ENCODE measurements at regions of chr4 and their contacts with region 1.

Region 1: GRCh38 chr4:89537281-89537680 is 229.7 kb upstream of the GPRIN3 start:
- DNase-seq: no peak
- ATAC-seq: no peak
- H3K4me3 Mint-ChIP-seq: no peak overlapping the region
- H3K27ac Mint-ChIP-seq: no peak overlapping the region
- H3K4me1 Mint-ChIP-seq: no peaks in the 10 kb centered on the region
- H3K27me3 Mint-ChIP-seq: peaks cover 3% of the 10 kb centered on the region
- CTCF ChIP-seq: no peak

Region 2: GRCh38 chr4:89700769-89701423 is 163.6 kb after region 1 on chr4:
- CTCF ChIA-PET with region 1: no interaction called
- POLR2A ChIA-PET with region 1: interaction called, 19 read pairs
- intact Hi-C with region 1: no loop called
- DNase-seq: no peak
- ATAC-seq: no peak
- H3K4me3 Mint-ChIP-seq: no peak overlapping the region
- H3K27ac Mint-ChIP-seq: no peak overlapping the region
- H3K4me1 Mint-ChIP-seq: no peaks in the 10 kb centered on the region
- H3K27me3 Mint-ChIP-seq: no peaks in the 10 kb centered on the region
- CTCF ChIP-seq: no peak

Measured in activated B cell treated with CpG ODN at 0.5 μM for 24 hours (primary cell).